Activated CD4-positive, alpha-beta T cell treated with anti-CD3 and anti-CD28 coated beads, Interleukin-2, amount 10 ng/mL, durations not matched to agents 7 days and 5 days (primary cell): ENCODE measurements at regions of chr1 and their contacts with region 1.

Region 1: DNA sequence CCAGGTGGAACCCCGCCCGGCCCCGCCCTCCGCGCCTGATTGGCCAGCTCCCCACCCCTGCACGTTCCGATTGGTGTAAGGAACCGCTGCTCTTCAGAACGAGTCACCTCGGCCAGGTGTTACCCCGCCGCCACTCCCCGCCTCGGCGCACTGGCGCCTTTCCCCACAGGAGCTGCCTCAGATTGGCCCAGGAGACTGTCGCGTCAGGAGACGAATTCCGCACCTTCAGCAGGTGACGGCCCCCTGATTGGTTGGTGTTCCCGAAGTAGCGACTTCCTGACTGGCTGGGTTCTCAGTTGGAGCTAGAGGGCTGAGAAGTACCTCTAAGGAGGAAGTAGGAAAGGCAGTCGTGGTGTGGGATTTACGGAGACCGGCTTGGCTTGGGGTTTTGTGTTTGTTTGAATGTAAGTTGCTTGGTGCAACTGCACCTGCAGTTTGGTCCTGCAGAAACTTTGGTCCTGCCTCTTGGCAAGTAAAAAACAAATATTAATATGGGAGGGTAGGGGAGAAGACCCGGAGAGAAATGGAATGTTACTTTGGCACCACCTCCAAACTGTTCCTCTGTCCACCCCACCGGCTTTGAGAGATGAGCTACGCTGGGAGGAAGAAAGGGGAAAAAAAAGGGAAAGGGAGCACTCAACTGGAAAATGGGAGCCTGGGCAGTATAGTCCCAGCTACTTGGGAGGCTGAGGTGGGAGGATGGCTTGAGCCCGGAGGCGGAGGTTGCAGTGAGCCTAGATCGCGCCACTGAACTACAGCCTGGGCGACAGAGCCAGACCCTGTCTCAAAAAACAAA is 411 bp upstream of the F11R start:
- DNase-seq: peak; percentile 88
- H3K4me3 Mint-ChIP-seq: peak overlapping the region; percentile 92
- H3K27ac Mint-ChIP-seq: peak overlapping the region; percentile 93
- H3K4me1 Mint-ChIP-seq: peaks cover 31% of the 10 kb centered on the region
- H3K27me3 Mint-ChIP-seq: peaks cover 2% of the 10 kb centered on the region

Region 2: DNA sequence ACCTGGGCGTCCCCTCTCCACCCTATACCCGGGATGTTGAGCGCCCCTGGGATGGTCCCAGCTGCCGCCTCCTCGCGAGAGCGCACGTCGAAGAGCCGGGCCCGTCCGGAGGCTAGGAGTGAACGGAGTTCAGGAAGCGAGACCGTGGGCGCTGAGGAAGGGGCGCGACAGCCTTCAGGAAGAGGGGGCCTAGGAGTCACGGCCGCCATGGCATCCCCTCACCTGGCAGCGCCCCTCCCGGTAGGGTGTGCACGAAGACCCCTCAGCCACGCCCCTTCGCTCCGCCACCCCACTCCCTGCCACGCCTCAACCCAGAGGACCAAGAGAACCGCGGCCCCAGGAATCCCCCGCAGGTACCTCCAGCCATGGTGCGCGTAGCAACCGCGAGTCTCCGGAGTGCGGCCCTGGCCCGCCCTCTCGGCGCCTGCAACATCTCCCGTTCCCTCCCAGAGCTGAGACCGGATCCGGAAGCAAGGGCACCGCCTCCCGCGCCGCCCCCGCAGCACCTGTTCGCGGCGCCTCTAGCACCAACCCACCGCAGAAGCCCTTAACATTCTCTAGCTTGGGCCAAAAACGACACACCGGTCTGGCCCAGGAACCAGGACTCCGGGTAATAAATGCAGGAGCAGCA is 17.3 kb after region 1 on chr1 and contains the start of gene TSTD1:
- CTCF ChIA-PET with region 1: interaction called, 19 read pairs
- POLR2A ChIA-PET with region 1: interaction called, 3 read pairs
- DNase-seq: peak; percentile 91
- H3K4me3 Mint-ChIP-seq: peak within 1 kb of the TSS; percentile 81
- H3K27ac Mint-ChIP-seq: peak within 1 kb of the TSS; percentile 94
- H3K4me1 Mint-ChIP-seq: peaks cover 44% of the 10 kb centered on the region
- H3K27me3 Mint-ChIP-seq: no peaks in the 10 kb centered on the region
- total RNA-seq, gene TSTD1: 33.5 to 43.6 TPM

Region 3: GRCh38 chr1:161261261-161262235 is 240.2 kb after region 1 on chr1:
- CTCF ChIA-PET with region 1: no interaction called
- POLR2A ChIA-PET with region 1: no interaction called
- DNase-seq: no peak
- H3K4me3 Mint-ChIP-seq: no peak overlapping the region
- H3K27ac Mint-ChIP-seq: no peak overlapping the region
- H3K4me1 Mint-ChIP-seq: peaks cover 13% of the 10 kb centered on the region
- H3K27me3 Mint-ChIP-seq: peaks cover 51% of the 10 kb centered on the region